IMR-90 (cell line): ENCODE measurements at regions of chr20 and their contacts with region 1.

Region 1: DNA sequence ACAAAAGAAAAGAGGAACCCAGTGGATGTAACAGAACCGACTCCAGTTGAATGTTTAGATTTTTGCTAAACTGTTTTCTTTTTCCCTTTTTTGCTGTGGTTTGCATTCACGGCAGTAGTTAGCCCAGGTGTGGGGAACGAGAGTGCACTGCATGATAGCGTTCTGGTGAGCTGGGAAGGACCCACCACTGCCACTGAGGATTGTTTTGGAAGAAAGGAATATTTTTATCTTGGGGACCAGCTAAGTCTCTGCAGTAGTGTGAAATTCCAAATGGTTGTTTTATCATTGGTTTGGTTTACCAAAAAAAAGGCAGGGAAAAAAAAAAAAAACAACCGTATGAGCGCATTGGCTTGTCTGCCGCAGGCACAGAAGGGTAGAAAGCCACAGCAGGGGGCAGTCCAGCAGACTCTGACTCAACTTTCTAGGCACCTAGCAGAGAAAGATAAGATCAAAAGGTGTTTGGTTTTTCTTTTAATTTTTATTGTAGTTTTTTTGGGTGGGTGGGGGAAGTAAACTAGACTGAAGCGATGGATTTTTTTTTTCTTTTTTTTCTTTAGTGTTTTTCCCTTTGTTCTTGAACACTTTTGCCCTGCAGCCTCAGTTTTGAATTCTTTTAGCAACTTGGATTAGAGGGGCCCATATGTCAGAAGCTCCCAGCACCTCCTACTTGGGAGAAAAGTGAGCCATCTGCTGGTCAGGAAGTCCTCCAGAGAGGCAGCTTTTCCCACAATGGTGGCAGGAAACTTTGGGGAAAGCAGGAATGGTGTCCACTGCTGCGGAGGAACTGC is 13.5 kb upstream of the RAB5IF start:
- DNase-seq: peak; percentile 51
- ATAC-seq: peak; percentile 84
- H3K4me3 ChIP-seq: no peak overlapping the region
- H3K27ac ChIP-seq: no peak overlapping the region
- H3K4me1 ChIP-seq: no peaks in the 10 kb centered on the region
- H3K27me3 ChIP-seq: no peaks in the 10 kb centered on the region
- CTCF ChIP-seq: peak; percentile 49
- POLR2A ChIP-seq: no peak
- RAD21 ChIP-seq: peak; percentile 40

Region 2: DNA sequence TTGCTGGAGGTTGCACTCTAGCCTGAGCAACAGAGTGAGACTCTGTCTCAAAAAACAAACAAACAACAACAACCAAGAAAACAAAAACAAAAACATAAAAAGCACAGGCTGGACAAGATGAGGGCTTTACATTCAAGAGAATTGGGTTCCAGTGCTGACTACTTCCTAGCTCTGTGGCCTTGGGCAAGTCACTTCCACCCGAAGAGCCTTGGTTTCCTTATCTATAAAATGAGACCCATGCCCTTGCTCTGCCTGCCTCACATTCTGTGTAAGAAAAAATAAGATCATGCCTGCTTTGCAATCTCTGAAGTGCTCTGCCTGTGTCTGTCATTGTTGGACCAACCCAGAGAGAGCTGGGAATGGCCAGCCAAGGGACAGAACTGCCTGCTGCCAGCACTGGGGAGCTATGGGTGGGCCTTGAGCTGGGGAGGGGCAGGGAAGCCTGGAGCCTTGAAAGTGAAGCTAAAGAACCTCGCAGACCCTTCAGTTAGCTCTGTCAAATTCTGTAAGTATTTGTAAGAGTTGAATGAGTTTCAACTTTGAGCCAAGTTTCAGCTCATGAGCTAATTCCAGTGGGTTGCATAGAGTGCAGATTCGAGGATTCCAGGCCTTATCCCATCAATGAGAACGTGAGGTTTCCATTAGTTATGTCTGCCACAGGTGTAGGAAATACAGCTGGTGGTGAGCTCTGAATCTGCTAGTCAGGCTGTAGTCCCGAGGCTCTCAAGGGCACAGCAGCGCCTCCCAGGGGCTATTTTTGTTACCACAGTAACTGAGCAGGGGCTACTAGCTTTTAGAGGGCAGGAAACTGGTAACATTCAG is 192.7 kb before region 1 on chr20:
- CTCF ChIA-PET with region 1: no interaction called
- POLR2A ChIA-PET with region 1: no interaction called
- dilution Hi-C with region 1: no loop called
- in situ Hi-C with region 1: no loop called
- intact Hi-C with region 1: no loop called
- DNase-seq: peak; percentile 11
- ATAC-seq: no peak
- H3K4me3 ChIP-seq: no peak overlapping the region
- H3K27ac ChIP-seq: no peak overlapping the region
- H3K4me1 ChIP-seq: no peaks in the 10 kb centered on the region
- H3K27me3 ChIP-seq: peaks cover 36% of the 10 kb centered on the region
- CTCF ChIP-seq: peak; percentile 29; the same call in 1 of the 2 replicates
- POLR2A ChIP-seq: no peak
- RAD21 ChIP-seq: no peak

Region 3: DNA sequence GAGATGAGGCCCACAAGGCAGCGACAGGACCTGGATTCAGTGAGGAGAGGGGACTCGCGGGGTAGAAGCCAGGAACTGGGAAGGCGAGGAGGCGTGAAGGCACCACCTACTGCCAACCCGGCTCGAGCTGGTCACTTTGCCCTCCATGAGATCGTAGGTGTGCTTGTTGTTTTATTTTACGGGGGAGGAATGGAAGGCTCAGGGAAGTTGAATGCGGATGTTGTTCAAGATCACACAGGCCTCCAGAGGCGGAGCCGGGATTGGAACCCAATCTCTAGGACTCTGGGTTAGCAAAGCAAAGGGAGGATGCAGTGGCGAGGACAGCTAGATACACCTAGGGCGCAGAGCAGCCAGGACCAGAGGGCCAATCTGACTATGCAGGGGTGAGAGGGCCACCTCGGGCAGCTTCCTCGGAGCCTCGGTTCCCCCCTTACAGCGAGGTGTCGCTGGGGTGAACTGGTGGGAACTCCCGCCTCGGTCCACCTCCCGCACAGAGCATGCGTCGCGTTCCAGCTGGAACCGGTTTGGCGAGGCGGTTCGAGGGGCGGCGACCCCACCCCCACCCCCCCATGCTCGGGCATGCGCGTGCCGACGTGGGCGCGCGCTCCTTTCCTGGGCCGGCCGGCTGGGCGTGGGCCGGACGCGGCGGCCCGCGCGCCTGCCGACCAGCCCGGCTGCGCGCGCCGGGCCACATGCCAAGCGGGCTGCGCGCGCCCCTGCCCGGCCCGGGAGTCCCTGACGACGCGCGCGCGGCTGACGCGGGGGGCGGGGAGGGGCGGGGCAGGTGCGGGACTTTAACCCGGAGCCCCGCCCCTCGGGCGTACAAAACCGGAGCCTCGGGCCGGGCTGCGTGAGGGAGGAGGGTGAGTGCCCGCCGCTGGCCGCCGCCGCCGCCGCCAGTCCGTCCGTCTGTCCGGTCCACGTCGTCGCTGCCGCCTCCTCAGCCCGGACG is 131.1 kb before region 1 on chr20:
- CTCF ChIA-PET with region 1: no interaction called
- POLR2A ChIA-PET with region 1: interaction called, 15 read pairs
- dilution Hi-C with region 1: no loop called
- in situ Hi-C with region 1: no loop called
- intact Hi-C with region 1: no loop called
- DNase-seq: peak; percentile 84
- ATAC-seq: peak; percentile 88
- H3K4me3 ChIP-seq: peak overlapping the region; percentile 82
- H3K27ac ChIP-seq: peak overlapping the region; percentile 90
- H3K4me1 ChIP-seq: peaks cover 21% of the 10 kb centered on the region
- H3K27me3 ChIP-seq: no peaks in the 10 kb centered on the region
- CTCF ChIP-seq: no peak
- POLR2A ChIP-seq: peak; percentile 88
- RAD21 ChIP-seq: no peak

Region 4: GRCh38 chr20:36768768-36769430 is 176.9 kb after region 1 on chr20:
- CTCF ChIA-PET with region 1: no interaction called
- POLR2A ChIA-PET with region 1: no interaction called
- dilution Hi-C with region 1: no loop called
- in situ Hi-C with region 1: no loop called
- intact Hi-C with region 1: no loop called
- DNase-seq: peak; percentile 51
- ATAC-seq: no peak
- H3K4me3 ChIP-seq: no peak overlapping the region
- H3K27ac ChIP-seq: peak overlapping the region; percentile 48; the same call in 1 of the 2 replicates
- H3K4me1 ChIP-seq: peaks cover 6% of the 10 kb centered on the region; the same call in 1 of the 2 replicates
- H3K27me3 ChIP-seq: no peaks in the 10 kb centered on the region
- CTCF ChIP-seq: no peak
- POLR2A ChIP-seq: no peak
- RAD21 ChIP-seq: no peak